ENCODE measurements at regions of chr12 and their contacts with region 1.

Region 1: DNA sequence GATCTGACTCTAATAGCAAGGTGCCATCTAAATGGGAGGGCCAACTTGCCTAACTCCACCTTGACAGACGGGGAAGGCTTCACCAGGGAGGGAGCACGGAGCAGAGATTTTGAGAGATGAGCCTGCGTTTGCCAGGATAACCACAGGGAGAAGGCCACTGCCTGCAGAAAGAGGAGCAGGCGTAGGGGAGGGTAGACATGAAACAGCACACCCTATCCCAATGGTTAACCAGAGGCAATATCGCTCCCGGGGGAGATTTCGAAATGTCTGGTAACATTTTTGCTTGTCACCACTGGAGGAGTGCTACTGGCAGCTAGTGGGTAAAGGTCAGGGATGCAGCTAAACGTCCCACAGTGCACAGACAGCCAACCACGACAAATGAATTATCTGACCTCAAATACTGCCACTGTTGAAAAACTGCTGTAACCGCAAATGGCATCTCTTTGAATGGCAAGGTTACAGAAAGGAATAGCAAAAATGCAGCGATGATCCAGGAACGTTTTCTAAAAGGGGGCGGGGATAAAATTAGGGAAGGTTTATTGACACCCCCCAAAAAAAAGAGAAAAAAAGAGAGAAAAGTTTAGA is 126.0 kb upstream of the ATF7IP start:
- DNase-seq: peak; percentile 62 to 73 (median 71)
- H3K4me3 ChIP-seq: peak overlapping the region; percentile 53 to 91 (median 84)
- H3K4me3 Mint-ChIP-seq: peak overlapping the region; percentile 77 to 86
- H3K27ac ChIP-seq: peak overlapping the region; percentile 69 to 86
- H3K27ac Mint-ChIP-seq: peak overlapping the region; percentile 79 to 96 (median 91)
- H3K4me1 ChIP-seq: peaks cover 21 to 27% of the 10 kb centered on the region in 2 donors
- H3K4me1 Mint-ChIP-seq: peaks cover 21% of the 10 kb centered on the region
- H3K27me3 ChIP-seq: no peaks in the 10 kb centered on the region
- H3K27me3 Mint-ChIP-seq: peaks cover 0 to 3% (median 1%) of the 10 kb centered on the region in 3 donors
- CTCF ChIP-seq: no peak

Region 2: DNA sequence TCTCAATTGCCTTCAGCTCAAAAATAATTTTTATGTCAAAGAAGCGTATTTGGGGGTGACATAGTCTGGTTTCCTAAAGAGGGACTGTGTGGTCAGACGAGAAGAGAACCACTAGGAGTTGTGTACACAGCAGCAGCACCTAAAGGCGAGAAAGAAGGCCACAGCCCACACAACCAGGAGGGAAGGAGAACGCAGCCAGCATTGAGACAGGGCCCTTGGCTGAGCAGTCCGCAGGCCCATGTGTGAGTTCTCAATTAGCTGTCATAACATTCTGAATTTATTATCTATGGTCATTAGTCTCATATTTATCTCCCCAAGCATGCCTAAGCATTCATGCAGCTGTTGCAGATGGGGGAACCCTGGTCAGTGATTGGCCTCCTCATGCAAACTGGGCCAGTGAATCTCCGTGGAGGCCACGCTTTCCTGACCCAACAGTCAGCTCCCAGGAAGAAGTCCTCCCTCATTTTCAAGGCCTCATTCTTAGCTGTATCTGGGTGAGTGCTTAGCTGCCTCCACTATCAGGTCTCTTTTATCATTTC is 44.8 kb after region 1 on chr12:
- intact Hi-C with region 1: no loop called
- DNase-seq: no peak
- H3K4me3 ChIP-seq: no peak overlapping the region
- H3K4me3 Mint-ChIP-seq: no peak overlapping the region
- H3K27ac ChIP-seq: no peak overlapping the region
- H3K27ac Mint-ChIP-seq: peak overlapping the region in 2 of 7 donors; percentile 19 to 41
- H3K4me1 ChIP-seq: peaks cover 4 to 8% of the 10 kb centered on the region in 2 donors
- H3K4me1 Mint-ChIP-seq: peaks cover 8% of the 10 kb centered on the region
- H3K27me3 ChIP-seq: no peaks in the 10 kb centered on the region
- H3K27me3 Mint-ChIP-seq: peaks cover 0 to 3% (median 2%) of the 10 kb centered on the region in 3 donors
- CTCF ChIP-seq: no peak

Region 3: DNA sequence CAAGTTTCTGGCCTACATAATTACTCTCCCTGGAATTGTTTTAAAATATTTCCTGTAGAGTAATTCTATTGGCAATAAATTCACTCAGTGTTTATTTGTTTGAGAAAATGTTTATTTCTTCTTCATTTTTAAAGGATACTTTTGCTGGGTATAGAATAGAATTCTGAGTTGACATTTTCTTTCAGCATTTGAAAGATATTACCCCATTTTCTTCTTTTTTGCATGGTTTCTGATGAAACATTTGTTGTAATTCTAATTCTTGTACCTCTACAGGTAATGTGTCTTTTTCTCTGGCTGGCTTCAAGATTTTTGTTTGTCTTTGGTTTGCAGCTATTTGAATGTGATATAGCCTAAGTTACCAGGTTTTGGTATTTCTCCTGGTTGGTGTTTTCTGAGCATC is 100.9 kb after region 1 on chr12:
- intact Hi-C with region 1: no loop called
- DNase-seq: no peak
- H3K4me3 ChIP-seq: no peak overlapping the region
- H3K4me3 Mint-ChIP-seq: no peak overlapping the region
- H3K27ac ChIP-seq: no peak overlapping the region
- H3K27ac Mint-ChIP-seq: no peak overlapping the region
- H3K4me1 ChIP-seq: no peaks in the 10 kb centered on the region
- H3K4me1 Mint-ChIP-seq: no peaks in the 10 kb centered on the region
- H3K27me3 ChIP-seq: no peaks in the 10 kb centered on the region
- H3K27me3 Mint-ChIP-seq: peaks cover 0 to 4% (median 1%) of the 10 kb centered on the region in 3 donors
- CTCF ChIP-seq: no peak

Region 4: GRCh38 chr12:14417715-14418114 is 178.3 kb after region 1 on chr12:
- intact Hi-C with region 1: loop called in 1 of 2 experiments (anchors 5 kb)
- DNase-seq: peak; percentile 49 to 70 (median 54)
- H3K4me3 ChIP-seq: no peak overlapping the region
- H3K4me3 Mint-ChIP-seq: peak overlapping the region in 1 of 2 donors; percentile 54
- H3K27ac ChIP-seq: peak overlapping the region in 1 of 2 donors; percentile 13
- H3K27ac Mint-ChIP-seq: peak overlapping the region in 3 of 7 donors; percentile 13 to 79 (median 38)
- H3K4me1 ChIP-seq: peaks cover 0 to 4% of the 10 kb centered on the region in 2 donors
- H3K4me1 Mint-ChIP-seq: peaks cover 14% of the 10 kb centered on the region
- H3K27me3 ChIP-seq: no peaks in the 10 kb centered on the region
- H3K27me3 Mint-ChIP-seq: no peaks in the 10 kb centered on the region
- CTCF ChIP-seq: no peak

Region 5: GRCh38 chr12:14664510-14664909 is 425.1 kb after region 1 on chr12:
- intact Hi-C with region 1: loop called in 1 of 2 experiments (anchors 5 kb)
- DNase-seq: peak; percentile 17 to 54 (median 24)
- H3K4me3 ChIP-seq: no peak overlapping the region
- H3K4me3 Mint-ChIP-seq: no peak overlapping the region
- H3K27ac ChIP-seq: no peak overlapping the region
- H3K27ac Mint-ChIP-seq: no peak overlapping the region
- H3K4me1 ChIP-seq: no peaks in the 10 kb centered on the region
- H3K4me1 Mint-ChIP-seq: peaks cover 9% of the 10 kb centered on the region
- H3K27me3 ChIP-seq: no peaks in the 10 kb centered on the region
- H3K27me3 Mint-ChIP-seq: peaks cover 2 to 21% (median 10%) of the 10 kb centered on the region in 3 donors
- CTCF ChIP-seq: peak; percentile 67

Region 6: DNA sequence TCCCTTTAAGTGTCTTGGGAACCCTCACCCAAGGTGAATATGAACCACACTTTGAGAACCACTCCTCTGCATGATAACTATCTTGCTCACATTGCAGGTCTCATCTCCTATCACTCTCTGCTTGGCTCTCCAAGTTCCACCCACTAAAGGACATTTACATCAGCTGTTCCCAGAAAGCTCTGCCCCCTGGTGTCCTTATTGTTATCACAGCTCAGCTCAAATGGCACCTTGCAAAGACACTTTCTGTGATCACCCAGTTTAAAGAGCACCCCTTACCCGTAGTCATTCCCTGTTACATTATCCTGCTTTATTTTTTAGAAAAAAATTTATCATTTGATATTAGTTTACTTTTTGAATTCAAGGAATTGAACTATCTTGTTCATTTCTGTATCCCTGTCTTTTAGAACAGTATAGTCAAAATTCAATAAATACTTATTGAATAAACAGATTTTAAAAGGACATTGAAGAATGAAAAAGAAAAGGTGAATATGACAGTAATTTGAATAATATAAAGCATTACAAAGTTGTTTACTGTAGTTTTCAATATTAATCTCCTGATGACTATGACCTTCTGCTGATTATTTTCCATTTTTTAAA is 477.5 kb after region 1 on chr12:
- intact Hi-C with region 1: loop called (anchors 5 kb)
- DNase-seq: peak; percentile 44 to 58 (median 58)
- H3K4me3 ChIP-seq: no peak overlapping the region
- H3K4me3 Mint-ChIP-seq: no peak overlapping the region
- H3K27ac ChIP-seq: no peak overlapping the region
- H3K27ac Mint-ChIP-seq: no peak overlapping the region
- H3K4me1 ChIP-seq: no peaks in the 10 kb centered on the region
- H3K4me1 Mint-ChIP-seq: no peaks in the 10 kb centered on the region
- H3K27me3 ChIP-seq: no peaks in the 10 kb centered on the region
- H3K27me3 Mint-ChIP-seq: peaks cover 4 to 7% (median 7%) of the 10 kb centered on the region in 3 donors
- CTCF ChIP-seq: peak; percentile 81